ENCODE measurements at regions of chr6 and their contacts with region 1.

Region 1: GRCh38 chr6:112180095-112180820 is 74.1 kb downstream of the LAMA4 start:
- DNase-seq: peak; percentile 56
- H3K4me3 Mint-ChIP-seq: no peak overlapping the region
- H3K27ac Mint-ChIP-seq: no peak overlapping the region
- H3K4me1 Mint-ChIP-seq: peaks cover 9% of the 10 kb centered on the region
- H3K27me3 Mint-ChIP-seq: no peaks in the 10 kb centered on the region
- CTCF ChIP-seq: peak; percentile 30

Region 2: GRCh38 chr6:111750753-111751684 is 429.2 kb before region 1 on chr6:
- CTCF ChIA-PET with region 1: no interaction called
- intact Hi-C with region 1: no loop called
- DNase-seq: no peak
- H3K4me3 Mint-ChIP-seq: no peak overlapping the region
- H3K27ac Mint-ChIP-seq: no peak overlapping the region
- H3K4me1 Mint-ChIP-seq: no peaks in the 10 kb centered on the region
- H3K27me3 Mint-ChIP-seq: no peaks in the 10 kb centered on the region
- CTCF ChIP-seq: no peak

Region 3: GRCh38 chr6:112081569-112081968 is 98.7 kb before region 1 on chr6:
- CTCF ChIA-PET with region 1: no interaction called
- intact Hi-C with region 1: no loop called
- DNase-seq: no peak
- H3K4me3 Mint-ChIP-seq: no peak overlapping the region
- H3K27ac Mint-ChIP-seq: no peak overlapping the region
- H3K4me1 Mint-ChIP-seq: no peaks in the 10 kb centered on the region
- H3K27me3 Mint-ChIP-seq: no peaks in the 10 kb centered on the region
- CTCF ChIP-seq: no peak

Region 4: GRCh38 chr6:112253841-112254816 is 73.9 kb after region 1 on chr6 and contains the start of gene LAMA4:
- CTCF ChIA-PET with region 1: interaction called, 6 read pairs
- intact Hi-C with region 1: loop called (anchors 5 kb)
- DNase-seq: peak; percentile 59
- H3K4me3 Mint-ChIP-seq: peak within 1 kb of the TSS; percentile 88
- H3K27ac Mint-ChIP-seq: peak within 1 kb of the TSS; percentile 98
- H3K4me1 Mint-ChIP-seq: peaks cover 43% of the 10 kb centered on the region
- H3K27me3 Mint-ChIP-seq: no peaks in the 10 kb centered on the region
- CTCF ChIP-seq: no peak
- total RNA-seq, gene LAMA4: 85.8 and 89.9 TPM in 2 replicates

Region 5: DNA sequence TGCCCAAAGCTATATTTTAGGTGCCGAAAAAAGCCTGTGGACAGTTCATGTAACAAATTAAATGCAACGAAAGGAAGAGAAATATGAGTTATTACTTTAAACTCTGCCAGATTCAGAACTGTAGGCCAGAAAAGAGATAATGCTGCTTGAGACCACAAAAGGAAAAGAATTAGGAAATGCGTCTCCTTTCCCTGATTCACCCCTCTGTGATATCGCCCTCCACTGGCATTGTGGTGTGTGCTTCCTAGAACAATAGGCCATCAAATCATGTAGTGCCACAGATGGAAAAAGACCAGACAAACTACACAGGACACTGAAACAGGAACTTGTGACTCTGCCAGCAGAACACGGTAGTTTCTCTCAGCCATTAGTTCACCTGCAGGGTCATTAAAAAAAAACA is 88.9 kb after region 1 on chr6:
- CTCF ChIA-PET with region 1: interaction called, 10 read pairs
- intact Hi-C with region 1: loop called (anchors 5 kb)
- DNase-seq: no peak
- H3K4me3 Mint-ChIP-seq: no peak overlapping the region
- H3K27ac Mint-ChIP-seq: no peak overlapping the region
- H3K4me1 Mint-ChIP-seq: no peaks in the 10 kb centered on the region
- H3K27me3 Mint-ChIP-seq: no peaks in the 10 kb centered on the region
- CTCF ChIP-seq: no peak

Region 6: GRCh38 chr6:112289038-112289566 is 108.8 kb after region 1 on chr6:
- CTCF ChIA-PET with region 1: no interaction called
- intact Hi-C with region 1: no loop called
- DNase-seq: no peak
- H3K4me3 Mint-ChIP-seq: no peak overlapping the region
- H3K27ac Mint-ChIP-seq: no peak overlapping the region
- H3K4me1 Mint-ChIP-seq: peaks cover 2% of the 10 kb centered on the region
- H3K27me3 Mint-ChIP-seq: no peaks in the 10 kb centered on the region
- CTCF ChIP-seq: no peak

Region 7: DNA sequence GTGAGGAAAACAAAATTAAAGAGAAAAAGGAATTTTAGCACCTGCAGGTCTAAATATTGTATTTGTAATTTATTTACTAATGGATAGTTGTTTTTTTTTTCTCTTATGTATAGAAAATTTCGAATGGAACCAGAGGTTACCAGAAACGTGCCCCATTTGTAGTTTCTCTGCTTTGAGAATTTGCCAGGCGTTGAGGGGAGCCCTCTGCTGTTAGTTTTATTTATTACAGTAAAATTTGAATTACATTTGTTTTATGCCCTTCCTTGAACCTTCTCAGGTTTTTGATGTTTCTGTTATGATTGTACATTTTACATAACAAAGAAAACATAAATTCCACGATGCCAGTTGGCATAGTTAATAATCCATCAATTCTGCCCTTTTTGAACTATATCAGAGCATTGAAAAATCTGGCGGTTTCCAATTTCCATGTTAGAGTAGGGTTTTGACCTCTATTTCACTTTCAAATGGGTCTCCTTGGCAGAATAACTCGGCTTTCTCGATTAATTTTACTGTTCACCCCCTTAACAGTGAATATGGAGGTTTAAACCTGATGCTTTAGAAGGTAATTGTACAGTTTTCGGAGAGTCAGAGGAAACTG is 131.8 kb after region 1 on chr6:
- CTCF ChIA-PET with region 1: interaction called, 28 read pairs
- intact Hi-C with region 1: loop called (anchors 1 kb)
- DNase-seq: no peak
- H3K4me3 Mint-ChIP-seq: no peak overlapping the region
- H3K27ac Mint-ChIP-seq: no peak overlapping the region
- H3K4me1 Mint-ChIP-seq: peaks cover 11% of the 10 kb centered on the region
- H3K27me3 Mint-ChIP-seq: no peaks in the 10 kb centered on the region
- CTCF ChIP-seq: peak; percentile 60

Region 8: DNA sequence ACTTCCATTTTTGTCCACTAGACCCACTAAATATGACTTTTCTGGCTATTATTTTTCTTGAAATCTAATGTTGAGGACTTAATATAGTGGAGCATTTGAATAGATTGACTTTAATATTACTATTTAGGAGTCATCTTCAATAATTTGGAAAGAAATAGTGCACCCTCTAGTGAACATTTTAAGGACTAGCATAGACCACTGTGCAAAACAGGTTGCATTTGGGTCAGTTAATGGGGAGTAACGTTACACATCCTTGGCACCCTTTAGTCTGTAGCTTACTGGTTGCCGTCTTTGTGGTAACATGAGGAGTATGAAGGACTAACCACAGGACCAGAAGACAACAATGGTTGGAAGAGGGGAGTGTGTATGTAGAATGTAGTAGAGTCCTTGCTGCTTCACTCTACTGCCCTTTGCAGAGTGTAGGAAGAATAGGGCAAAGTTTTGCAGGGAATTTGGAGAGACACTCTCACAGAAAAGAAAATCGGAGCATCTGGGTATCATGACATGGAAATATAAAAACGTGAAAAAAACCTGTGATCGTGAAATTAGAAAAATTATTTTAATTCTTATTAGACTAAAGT is 192.1 kb after region 1 on chr6:
- CTCF ChIA-PET with region 1: interaction called, 5 read pairs
- intact Hi-C with region 1: loop called (anchors 1 kb)
- DNase-seq: no peak
- H3K4me3 Mint-ChIP-seq: no peak overlapping the region
- H3K27ac Mint-ChIP-seq: no peak overlapping the region
- H3K4me1 Mint-ChIP-seq: peaks cover 8% of the 10 kb centered on the region
- H3K27me3 Mint-ChIP-seq: peaks cover 40% of the 10 kb centered on the region
- CTCF ChIP-seq: no peak

Region 9: GRCh38 chr6:113936093-113936934 is 1756.1 kb after region 1 on chr6:
- CTCF ChIA-PET with region 1: no interaction called
- intact Hi-C with region 1: loop called (anchors 1 kb)
- DNase-seq: peak; percentile 29
- H3K4me3 Mint-ChIP-seq: no peak overlapping the region
- H3K27ac Mint-ChIP-seq: no peak overlapping the region
- H3K4me1 Mint-ChIP-seq: no peaks in the 10 kb centered on the region
- H3K27me3 Mint-ChIP-seq: no peaks in the 10 kb centered on the region
- CTCF ChIP-seq: peak; percentile 40

Measured in Calu3 (cell line).